CD4-positive, alpha-beta memory T cell (primary cell): ENCODE measurements at regions of chr2 and their contacts with region 1.

Region 1: GRCh38 chr2:176079831-176080539 is 3.8 kb downstream of the EVX2 start:
- DNase-seq: peak in 1 of 5 donors; percentile 24
- H3K4me3 ChIP-seq: no peak overlapping the region
- H3K4me3 Mint-ChIP-seq: peak overlapping the region in 6 of 8 donors; percentile 64 to 82 (median 72)
- H3K27ac ChIP-seq: no peak overlapping the region
- H3K27ac Mint-ChIP-seq: peak overlapping the region in 4 of 7 donors; percentile 90 to 95 (median 92)
- H3K4me1 ChIP-seq: no peaks in the 10 kb centered on the region
- H3K4me1 Mint-ChIP-seq: peaks cover 3 to 24% (median 9%) of the 10 kb centered on the region in 4 donors
- H3K27me3 ChIP-seq: peaks cover 85% of the 10 kb centered on the region
- H3K27me3 Mint-ChIP-seq: peaks cover 62 to 63% of the 10 kb centered on the region in 2 donors

Region 2: DNA sequence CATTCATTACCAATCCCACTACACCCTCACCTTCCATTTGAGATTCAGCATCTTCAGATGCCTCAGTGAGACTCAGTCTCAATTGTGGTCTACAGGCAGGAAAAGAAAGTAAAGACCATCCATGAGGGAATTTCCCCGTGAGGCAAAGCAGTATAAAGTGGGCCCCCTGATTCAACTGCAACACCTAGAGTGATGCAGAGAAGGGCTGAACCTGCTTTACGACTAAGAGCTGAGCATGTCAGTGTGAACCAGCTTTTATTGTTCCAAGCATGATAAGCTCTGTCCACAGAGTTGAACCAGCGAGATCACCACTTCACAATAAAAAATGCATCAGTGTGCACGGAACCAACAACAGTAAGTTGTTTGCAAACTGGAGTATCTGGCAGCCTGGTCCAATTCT is 540.9 kb before region 1 on chr2:
- CTCF ChIA-PET with region 1: no interaction called
- POLR2A ChIA-PET with region 1: no interaction called
- intact Hi-C with region 1: no loop called
- DNase-seq: no peak
- H3K4me3 ChIP-seq: no peak overlapping the region
- H3K4me3 Mint-ChIP-seq: no peak overlapping the region
- H3K27ac ChIP-seq: no peak overlapping the region
- H3K27ac Mint-ChIP-seq: no peak overlapping the region
- H3K4me1 ChIP-seq: no peaks in the 10 kb centered on the region
- H3K4me1 Mint-ChIP-seq: no peaks in the 10 kb centered on the region
- H3K27me3 ChIP-seq: no peaks in the 10 kb centered on the region
- H3K27me3 Mint-ChIP-seq: no peaks in the 10 kb centered on the region

Region 3: DNA sequence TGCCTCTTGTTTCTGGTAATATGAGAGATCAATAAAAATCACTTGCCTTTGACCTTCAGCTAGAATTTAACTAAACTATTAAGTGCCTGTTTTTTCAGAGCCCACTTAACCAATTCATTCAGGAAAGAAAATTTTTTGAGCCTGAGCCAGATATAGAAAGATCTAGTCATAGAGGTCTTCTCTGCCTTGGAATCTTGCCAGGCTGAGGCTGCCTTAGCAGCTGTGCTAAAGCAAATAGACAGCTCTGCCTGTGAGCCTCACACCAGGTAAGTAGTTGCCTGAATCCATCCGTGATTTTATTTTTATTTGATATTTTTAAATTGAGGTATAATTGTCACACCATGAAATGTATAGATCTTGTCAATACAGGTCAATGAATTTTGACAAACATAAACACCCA is 23.6 kb before region 1 on chr2:
- CTCF ChIA-PET with region 1: no interaction called
- POLR2A ChIA-PET with region 1: no interaction called
- intact Hi-C with region 1: no loop called
- DNase-seq: no peak
- H3K4me3 ChIP-seq: no peak overlapping the region
- H3K4me3 Mint-ChIP-seq: no peak overlapping the region
- H3K27ac ChIP-seq: no peak overlapping the region
- H3K27ac Mint-ChIP-seq: no peak overlapping the region
- H3K4me1 ChIP-seq: no peaks in the 10 kb centered on the region
- H3K4me1 Mint-ChIP-seq: no peaks in the 10 kb centered on the region
- H3K27me3 ChIP-seq: peaks cover 6% of the 10 kb centered on the region
- H3K27me3 Mint-ChIP-seq: peaks cover 27 to 30% of the 10 kb centered on the region in 2 donors

Region 4: GRCh38 chr2:176110975-176111663 is 31.1 kb after region 1 on chr2:
- CTCF ChIA-PET with region 1: no interaction called
- POLR2A ChIA-PET with region 1: no interaction called
- intact Hi-C with region 1: loop called (anchors 5 kb)
- DNase-seq: no peak
- H3K4me3 ChIP-seq: no peak overlapping the region
- H3K4me3 Mint-ChIP-seq: peak overlapping the region in 4 of 8 donors; percentile 17 to 32 (median 27)
- H3K27ac ChIP-seq: no peak overlapping the region
- H3K27ac Mint-ChIP-seq: peak overlapping the region in 4 of 7 donors; percentile 57 to 81 (median 70)
- H3K4me1 ChIP-seq: peaks cover 10% of the 10 kb centered on the region
- H3K4me1 Mint-ChIP-seq: peaks cover 9 to 26% (median 17%) of the 10 kb centered on the region in 4 donors
- H3K27me3 ChIP-seq: peaks cover 67% of the 10 kb centered on the region
- H3K27me3 Mint-ChIP-seq: peaks cover 62 to 70% of the 10 kb centered on the region in 2 donors

Region 5: GRCh38 chr2:176534798-176535466 is 454.9 kb after region 1 on chr2:
- CTCF ChIA-PET with region 1: no interaction called
- POLR2A ChIA-PET with region 1: no interaction called
- intact Hi-C with region 1: no loop called
- DNase-seq: no peak
- H3K4me3 ChIP-seq: no peak overlapping the region
- H3K4me3 Mint-ChIP-seq: no peak overlapping the region
- H3K27ac ChIP-seq: no peak overlapping the region
- H3K27ac Mint-ChIP-seq: no peak overlapping the region
- H3K4me1 ChIP-seq: no peaks in the 10 kb centered on the region
- H3K4me1 Mint-ChIP-seq: no peaks in the 10 kb centered on the region
- H3K27me3 ChIP-seq: no peaks in the 10 kb centered on the region
- H3K27me3 Mint-ChIP-seq: peaks cover 8 to 13% of the 10 kb centered on the region in 2 donors